Naive thymus-derived CD4-positive, alpha-beta T cell (primary cell): ENCODE measurements at regions of chr11 and their contacts with region 1.

Region 1: GRCh38 chr11:116787786-116788486 is at the start of gene ZPR1:
- DNase-seq: peak; percentile 75 to 88 (median 87)
- ATAC-seq: peak; percentile 92
- H3K4me3 ChIP-seq: peak within 1 kb of the TSS; percentile 79
- H3K4me3 Mint-ChIP-seq: peak within 1 kb of the TSS; percentile 85 to 98 (median 92)
- H3K27ac ChIP-seq: peak within 1 kb of the TSS; percentile 95
- H3K27ac Mint-ChIP-seq: peak within 1 kb of the TSS; percentile 80 to 98 (median 96)
- H3K4me1 ChIP-seq: peaks cover 17 to 24% of the 10 kb centered on the region in 2 donors
- H3K4me1 Mint-ChIP-seq: peaks cover 32 to 57% (median 44%) of the 10 kb centered on the region in 7 donors
- H3K27me3 ChIP-seq: no peaks in the 10 kb centered on the region
- H3K27me3 Mint-ChIP-seq: no peaks in the 10 kb centered on the region
- total RNA-seq, gene ZPR1: 65.8 to 117 (median 68.8) TPM

Region 2: DNA sequence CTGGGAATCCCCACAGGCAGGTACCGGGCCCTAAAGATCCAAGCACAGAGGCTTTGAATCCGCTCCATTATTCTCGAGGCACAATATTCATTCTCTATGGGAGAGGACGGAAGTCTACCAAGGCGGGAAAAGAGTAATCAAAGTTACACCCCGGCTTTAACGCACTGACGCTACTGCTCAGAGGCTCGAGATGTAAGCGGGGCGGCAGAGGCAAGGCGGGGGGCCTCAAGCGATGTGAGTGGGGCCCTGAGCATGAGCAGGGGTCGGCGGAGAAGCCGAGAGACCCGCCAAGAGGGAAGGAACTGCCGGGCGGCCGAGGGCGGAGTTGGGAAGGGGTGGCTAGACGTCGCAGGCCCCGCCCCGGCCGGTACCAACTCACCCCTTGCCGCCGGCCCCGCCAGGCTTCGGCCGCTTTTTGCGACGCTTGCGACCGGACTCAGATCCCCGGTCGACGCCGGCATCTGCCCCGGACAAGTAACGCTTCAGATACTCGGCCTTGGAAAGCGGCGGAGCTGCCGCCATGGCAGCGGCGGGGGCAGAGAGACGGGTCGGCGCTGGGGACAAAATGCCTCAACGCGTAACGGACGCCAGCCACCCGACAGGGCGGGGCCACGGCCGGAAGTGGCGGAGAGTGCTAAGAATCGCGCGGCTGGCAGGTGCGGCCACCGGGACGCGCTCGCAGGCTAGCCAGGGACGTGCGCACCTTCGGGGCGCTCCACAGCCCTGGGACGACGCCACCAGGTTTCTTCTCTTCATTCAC is 15.3 kb before region 1 on chr11 and contains the start of gene BUD13:
- CTCF ChIA-PET with region 1: interaction called, 12 read pairs
- POLR2A ChIA-PET with region 1: interaction called, 49 read pairs
- intact Hi-C with region 1: loop called (anchors 1 kb)
- DNase-seq: peak; percentile 89 to 98 (median 93)
- ATAC-seq: peak; percentile 97
- H3K4me3 ChIP-seq: peak within 1 kb of the TSS; percentile 94
- H3K4me3 Mint-ChIP-seq: peak within 1 kb of the TSS; percentile 86 to 99 (median 96)
- H3K27ac ChIP-seq: peak within 1 kb of the TSS; percentile 93
- H3K27ac Mint-ChIP-seq: peak within 1 kb of the TSS; percentile 92 to 99 (median 97)
- H3K4me1 ChIP-seq: peaks cover 19 to 20% of the 10 kb centered on the region in 2 donors
- H3K4me1 Mint-ChIP-seq: peaks cover 25 to 53% (median 44%) of the 10 kb centered on the region in 7 donors
- H3K27me3 ChIP-seq: no peaks in the 10 kb centered on the region
- H3K27me3 Mint-ChIP-seq: no peaks in the 10 kb centered on the region
- total RNA-seq, gene BUD13: 10.3 to 32.0 (median 20.3) TPM

Region 3: GRCh38 chr11:116853461-116854073 is 65.6 kb after region 1 on chr11:
- CTCF ChIA-PET with region 1: interaction called, 11 read pairs
- POLR2A ChIA-PET with region 1: interaction called, 5 read pairs
- intact Hi-C with region 1: loop called (anchors 1 kb)
- DNase-seq: peak in 8 of 9 donors; percentile 53 to 84 (median 77)
- ATAC-seq: peak; percentile 98
- H3K4me3 ChIP-seq: peak overlapping the region; percentile 38
- H3K4me3 Mint-ChIP-seq: peak overlapping the region; percentile 47 to 84 (median 70)
- H3K27ac ChIP-seq: peak overlapping the region; percentile 4
- H3K27ac Mint-ChIP-seq: peak overlapping the region; percentile 41 to 92 (median 81)
- H3K4me1 ChIP-seq: peaks cover 57 to 70% of the 10 kb centered on the region in 2 donors
- H3K4me1 Mint-ChIP-seq: peaks cover 52 to 78% (median 76%) of the 10 kb centered on the region in 7 donors
- H3K27me3 ChIP-seq: no peaks in the 10 kb centered on the region
- H3K27me3 Mint-ChIP-seq: no peaks in the 10 kb centered on the region

Region 4: GRCh38 chr11:117107701-117108590 is 320.0 kb after region 1 on chr11:
- CTCF ChIA-PET with region 1: interaction called, 39 read pairs
- POLR2A ChIA-PET with region 1: no interaction called
- intact Hi-C with region 1: loop called in 1 of 2 experiments (anchors 1 kb)
- DNase-seq: no peak
- ATAC-seq: no peak
- H3K4me3 ChIP-seq: no peak overlapping the region
- H3K4me3 Mint-ChIP-seq: no peak overlapping the region
- H3K27ac ChIP-seq: no peak overlapping the region
- H3K27ac Mint-ChIP-seq: no peak overlapping the region
- H3K4me1 ChIP-seq: no peaks in the 10 kb centered on the region
- H3K4me1 Mint-ChIP-seq: peaks cover 0 to 5% (median 0%) of the 10 kb centered on the region in 7 donors
- H3K27me3 ChIP-seq: no peaks in the 10 kb centered on the region
- H3K27me3 Mint-ChIP-seq: peaks cover 0 to 5% (median 0%) of the 10 kb centered on the region in 5 donors

Region 5: DNA sequence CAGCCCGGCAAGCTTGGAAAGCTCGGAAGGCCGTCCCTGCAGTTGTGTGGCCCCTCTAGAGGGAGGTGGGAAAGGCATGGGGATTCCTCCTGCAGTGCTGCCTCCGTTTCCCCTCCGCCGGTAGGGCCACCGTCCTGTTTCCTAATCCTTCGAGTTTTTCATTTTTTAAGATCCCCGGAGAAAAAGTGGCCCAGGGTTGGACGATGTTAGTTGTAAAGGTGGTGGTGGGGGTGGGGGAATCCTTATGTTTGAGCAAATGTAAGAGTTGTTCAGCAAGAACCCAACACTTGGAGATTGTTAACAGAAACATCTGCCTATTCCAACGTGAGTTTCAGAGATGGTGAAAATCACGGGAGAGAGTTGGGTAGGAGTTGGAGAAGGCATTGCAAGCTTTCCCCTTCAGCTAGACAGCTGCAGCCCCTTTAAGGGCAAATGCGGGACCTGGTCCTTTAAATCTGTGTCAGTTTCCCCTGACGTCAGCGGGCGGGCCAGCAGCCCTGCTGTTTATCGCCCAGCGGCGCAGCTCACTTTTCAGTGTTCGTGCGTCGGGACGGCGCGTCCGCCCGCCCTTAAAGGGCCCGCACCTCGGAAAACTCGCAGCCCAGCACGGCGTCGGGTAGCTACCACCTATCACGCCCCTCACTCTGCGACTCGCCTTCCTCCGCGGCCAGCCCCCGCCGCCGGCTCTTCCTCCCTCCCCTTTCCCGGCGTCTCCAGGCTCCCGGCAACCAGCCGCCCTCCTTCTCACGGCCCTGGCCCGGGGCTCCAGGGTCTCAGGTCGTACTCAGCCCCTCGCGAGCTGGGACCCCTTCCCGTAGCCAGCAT is 390.5 kb after region 1 on chr11 and contains the start of gene SIDT2:
- CTCF ChIA-PET with region 1: interaction called, 3 read pairs
- POLR2A ChIA-PET with region 1: interaction called, 7 read pairs
- intact Hi-C with region 1: loop called in 1 of 2 experiments (anchors 1 kb)
- DNase-seq: peak; percentile 75 to 89 (median 87)
- ATAC-seq: peak; percentile 94
- H3K4me3 ChIP-seq: peak within 1 kb of the TSS; percentile 87
- H3K4me3 Mint-ChIP-seq: peak within 1 kb of the TSS; percentile 92 to 98 (median 94)
- H3K27ac ChIP-seq: peak within 1 kb of the TSS; percentile 85
- H3K27ac Mint-ChIP-seq: peak within 1 kb of the TSS; percentile 88 to 98 (median 96)
- H3K4me1 ChIP-seq: peaks cover 12 to 26% of the 10 kb centered on the region in 2 donors
- H3K4me1 Mint-ChIP-seq: peaks cover 26 to 42% (median 32%) of the 10 kb centered on the region in 7 donors
- H3K27me3 ChIP-seq: no peaks in the 10 kb centered on the region
- H3K27me3 Mint-ChIP-seq: no peaks in the 10 kb centered on the region
- total RNA-seq, gene SIDT2: 31.7 to 187 (median 60.5) TPM

Region 6: DNA sequence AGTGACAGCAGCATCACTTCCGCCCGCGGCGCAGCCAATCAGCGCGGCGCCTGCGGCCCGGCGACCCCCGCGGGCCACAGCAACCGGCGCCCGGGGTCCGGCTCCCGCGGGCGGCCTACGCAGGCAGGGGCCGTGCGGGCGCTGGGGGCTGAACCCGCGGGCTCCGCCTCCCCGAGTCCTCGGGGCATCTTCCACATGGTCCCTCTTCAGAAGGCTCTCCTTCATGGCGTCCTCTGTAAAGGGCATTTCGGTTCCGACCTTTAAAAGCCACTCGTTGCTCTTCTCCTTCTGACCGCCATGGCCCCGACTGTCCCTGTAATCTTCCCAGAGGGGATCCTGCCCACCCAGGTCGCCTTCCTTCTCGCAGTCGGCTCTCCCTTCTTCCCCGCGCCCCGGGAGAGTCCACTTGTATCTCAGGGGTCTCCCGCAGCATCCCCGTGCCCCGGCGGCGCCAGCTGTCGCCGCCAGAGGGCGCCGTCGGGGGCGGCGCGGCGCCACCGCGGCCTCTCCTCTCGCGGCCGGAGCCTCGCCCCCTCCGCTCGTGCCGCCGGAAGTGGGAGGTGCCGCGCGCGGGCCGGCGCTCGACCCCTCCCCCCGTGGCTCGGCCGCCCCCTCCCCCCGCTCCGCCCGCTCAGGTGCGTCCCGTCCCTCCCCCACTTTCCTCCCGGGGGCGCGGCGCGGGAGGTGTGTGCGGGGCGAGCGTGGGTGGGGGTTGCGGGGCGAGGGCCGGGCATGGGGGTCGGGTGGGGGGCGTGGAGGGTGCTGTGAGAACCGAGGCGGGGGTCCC is 444.3 kb after region 1 on chr11 and contains the start of gene RNF214:
- CTCF ChIA-PET with region 1: interaction called, 9 read pairs
- POLR2A ChIA-PET with region 1: interaction called, 7 read pairs
- intact Hi-C with region 1: loop called in 1 of 2 experiments (anchors 1 kb)
- DNase-seq: peak; percentile 61 to 84 (median 73)
- ATAC-seq: peak; percentile 92
- H3K4me3 ChIP-seq: peak within 1 kb of the TSS; percentile 96
- H3K4me3 Mint-ChIP-seq: peak within 1 kb of the TSS; percentile 91 to 100 (median 98)
- H3K27ac ChIP-seq: peak within 1 kb of the TSS; percentile 97
- H3K27ac Mint-ChIP-seq: peak within 1 kb of the TSS; percentile 94 to 100 (median 99)
- H3K4me1 ChIP-seq: peaks cover 32 to 35% of the 10 kb centered on the region in 2 donors
- H3K4me1 Mint-ChIP-seq: peaks cover 40 to 55% (median 50%) of the 10 kb centered on the region in 7 donors
- H3K27me3 ChIP-seq: no peaks in the 10 kb centered on the region
- H3K27me3 Mint-ChIP-seq: no peaks in the 10 kb centered on the region
- total RNA-seq, gene RNF214: 16.6 to 36.0 (median 24.0) TPM